MCF 10A (cell line): ENCODE measurements at regions of chr1 and their contacts with region 1.

Region 1: DNA sequence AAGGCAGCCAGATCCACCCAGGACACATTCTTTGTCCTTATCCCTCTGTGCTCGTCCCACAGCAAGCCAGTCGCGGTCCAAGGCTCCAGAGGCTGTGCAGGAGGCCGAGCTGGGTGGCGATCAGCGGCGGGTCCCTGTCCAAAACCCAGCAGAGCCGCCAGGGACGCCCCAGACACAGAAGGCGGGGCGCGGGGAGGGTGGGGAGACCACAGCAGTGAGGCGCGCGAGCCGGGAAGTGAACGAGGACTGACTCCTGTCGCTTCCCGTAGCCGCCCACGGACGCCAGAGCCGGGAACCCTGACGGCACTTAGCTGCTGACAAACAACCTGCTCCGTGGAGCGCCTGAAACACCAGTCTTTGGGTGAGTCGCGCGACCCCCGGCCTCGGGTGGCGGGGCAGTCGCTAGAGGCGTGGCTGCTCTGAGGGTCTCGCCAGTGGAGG is at the start of gene LGALS8:
- DNase-seq: peak; percentile 92
- H3K4me3 Mint-ChIP-seq: peak within 1 kb of the TSS; percentile 98
- H3K27ac Mint-ChIP-seq: peak within 1 kb of the TSS; percentile 97
- H3K4me1 Mint-ChIP-seq: peaks cover 6% of the 10 kb centered on the region
- H3K27me3 Mint-ChIP-seq: no peaks in the 10 kb centered on the region
- CTCF ChIP-seq: no peak
- total RNA-seq, gene LGALS8: 73.2 and 99.7 TPM in 2 replicates

Region 2: GRCh38 chr1:236534151-236534651 is 10.5 kb after region 1 on chr1:
- CTCF ChIA-PET with region 1: interaction called, 8 read pairs
- POLR2A ChIA-PET with region 1: interaction called, 99 read pairs
- intact Hi-C with region 1: no loop called
- DNase-seq: peak; percentile 22
- H3K4me3 Mint-ChIP-seq: no peak overlapping the region
- H3K27ac Mint-ChIP-seq: peak overlapping the region; percentile 9
- H3K4me1 Mint-ChIP-seq: peaks cover 34% of the 10 kb centered on the region
- H3K27me3 Mint-ChIP-seq: no peaks in the 10 kb centered on the region
- CTCF ChIP-seq: no peak